ENCODE measurements at regions of chr1 and their contacts with region 1.

Region 1: GRCh38 chr1:30779294-30780071 is 21.9 kb upstream of the LAPTM5 start:
- DNase-seq: peak; percentile 37 to 76
- ATAC-seq: peak; percentile 63 to 64
- H3K4me3 ChIP-seq: no peak overlapping the region
- H3K27ac ChIP-seq: no peak overlapping the region
- H3K4me1 ChIP-seq: peaks cover 5 to 14% of the 10 kb centered on the region in 2 donors
- H3K27me3 ChIP-seq: no peaks in the 10 kb centered on the region
- CTCF ChIP-seq: peak; percentile 94 to 97 (median 96)
- POLR2A ChIP-seq: no peak

Region 2: DNA sequence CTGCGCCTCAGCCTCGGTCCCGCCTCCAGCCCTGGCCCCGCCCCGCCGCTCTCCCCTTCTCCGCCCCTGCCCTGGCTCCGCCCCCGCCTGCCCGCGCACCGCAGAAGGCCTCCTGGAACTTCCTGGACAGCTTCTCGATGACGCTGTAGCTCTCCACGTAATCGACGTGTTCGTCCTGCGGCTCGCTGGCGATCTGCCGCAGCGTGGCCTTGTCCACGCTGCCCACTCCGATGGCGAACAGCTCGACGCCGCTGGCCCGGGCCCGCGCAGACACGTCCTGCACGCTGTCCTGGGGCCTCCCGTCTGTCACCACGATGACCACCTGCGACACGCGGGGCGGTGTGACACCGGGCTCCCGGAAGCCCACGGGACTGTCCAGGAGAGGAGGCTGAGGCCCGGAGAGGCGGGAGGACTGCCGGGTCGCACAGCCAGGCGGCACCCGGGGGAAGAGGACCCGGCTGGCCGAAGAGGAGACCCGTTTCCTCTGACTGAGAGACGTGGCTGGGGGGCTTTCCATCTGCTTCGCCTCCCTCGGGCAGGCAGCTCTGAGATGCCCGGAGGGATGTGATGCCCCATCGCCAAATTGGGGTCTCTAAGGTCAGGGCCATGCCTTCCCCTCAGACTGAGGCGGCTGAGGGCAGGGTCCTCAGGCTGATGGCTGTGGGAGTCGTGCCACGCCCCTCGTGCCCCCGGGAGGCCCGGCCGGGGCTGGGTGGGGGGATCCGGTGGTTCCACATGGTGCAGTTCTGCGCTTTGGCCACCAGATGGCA is 60.7 kb before region 1 on chr1:
- in situ Hi-C with region 1: loop called in 2 of 4 experiments (anchors 5 kb)
- intact Hi-C with region 1: loop called (anchors 1 kb)
- DNase-seq: peak; percentile 71 to 94
- ATAC-seq: peak; percentile 79 to 81
- H3K4me3 ChIP-seq: peak overlapping the region; percentile 60 to 85 (median 73)
- H3K27ac ChIP-seq: peak overlapping the region; percentile 97 to 98 (median 98)
- H3K4me1 ChIP-seq: peaks cover 0 to 3% of the 10 kb centered on the region in 2 donors
- H3K27me3 ChIP-seq: no peaks in the 10 kb centered on the region
- CTCF ChIP-seq: peak; percentile 98 to 100 (median 99)
- POLR2A ChIP-seq: peak; percentile 80 to 85

Region 3: DNA sequence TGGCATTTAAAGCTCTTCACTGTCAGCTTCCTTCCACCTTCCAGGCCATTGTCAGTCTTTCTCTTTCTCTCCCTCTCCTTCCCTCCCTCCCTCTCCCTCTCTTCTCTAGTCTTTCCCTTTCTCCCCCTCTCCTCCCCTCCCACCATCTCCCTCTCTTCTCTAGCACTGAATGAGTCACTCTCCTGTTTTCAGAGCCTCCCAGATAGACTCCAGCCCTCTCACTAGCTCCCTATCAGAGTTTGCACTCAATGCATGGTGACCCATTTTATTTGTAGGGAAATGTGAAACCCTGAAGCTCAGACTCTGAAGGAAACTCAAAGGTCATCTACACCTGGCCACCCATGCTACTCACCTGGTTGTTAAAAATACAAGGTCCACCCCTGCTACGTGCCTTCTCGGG is 51.7 kb before region 1 on chr1:
- in situ Hi-C with region 1: loop called (anchors 5 kb)
- intact Hi-C with region 1: no loop called
- DNase-seq: no peak
- ATAC-seq: no peak
- H3K4me3 ChIP-seq: no peak overlapping the region
- H3K27ac ChIP-seq: no peak overlapping the region
- H3K4me1 ChIP-seq: no peaks in the 10 kb centered on the region
- H3K27me3 ChIP-seq: no peaks in the 10 kb centered on the region
- CTCF ChIP-seq: no peak
- POLR2A ChIP-seq: no peak

Region 4: DNA sequence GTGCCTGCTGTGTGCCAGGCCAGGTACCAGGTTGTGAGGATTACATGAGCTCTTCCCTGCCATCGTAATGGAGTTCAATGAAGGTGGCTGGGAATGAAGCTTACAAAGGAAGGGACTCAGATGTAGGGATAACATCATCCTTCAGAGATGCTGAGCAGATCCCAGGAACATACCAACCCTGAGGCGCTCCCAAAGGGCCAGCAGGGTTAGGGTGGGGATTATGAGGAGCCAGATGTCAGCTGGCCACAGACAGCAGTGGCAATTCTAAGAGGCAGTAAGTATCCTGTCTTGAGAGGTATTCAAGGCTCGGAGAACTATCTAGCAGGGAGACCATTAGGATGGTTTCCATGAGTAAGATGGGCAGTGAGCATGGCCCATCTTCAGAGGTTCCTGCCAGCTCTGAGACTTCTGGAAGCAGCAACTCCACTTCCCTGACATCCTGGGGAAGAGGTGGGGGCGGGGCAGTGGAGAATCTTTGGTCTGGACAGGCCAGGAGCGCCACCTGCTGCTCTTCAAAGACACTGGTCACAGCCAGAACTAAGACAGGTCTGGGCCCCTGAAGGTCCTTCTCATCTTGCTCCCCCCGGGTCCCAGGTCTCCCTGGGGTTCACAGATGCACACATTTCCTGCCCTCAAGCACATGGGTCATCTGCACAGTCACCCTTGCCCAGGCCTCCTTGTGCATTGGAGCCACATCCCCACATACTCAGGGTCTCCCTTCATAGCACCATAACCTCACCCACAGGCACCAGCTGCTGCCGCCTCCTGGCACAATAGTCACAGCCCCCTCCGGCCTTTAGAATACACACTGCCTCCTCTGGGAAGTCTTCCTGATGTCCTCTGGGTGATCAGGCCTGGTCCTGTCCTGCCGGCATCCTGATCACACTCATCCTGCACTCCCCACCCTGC is 131.8 kb after region 1 on chr1:
- in situ Hi-C with region 1: no loop called
- intact Hi-C with region 1: loop called (anchors 1 kb)
- DNase-seq: peak; percentile 72 to 80
- ATAC-seq: peak; percentile 84
- H3K4me3 ChIP-seq: no peak overlapping the region
- H3K27ac ChIP-seq: no peak overlapping the region
- H3K4me1 ChIP-seq: no peaks in the 10 kb centered on the region
- H3K27me3 ChIP-seq: peaks cover 0 to 7% (median 0%) of the 10 kb centered on the region in 3 donors
- CTCF ChIP-seq: peak; percentile 84 to 89 (median 87)
- POLR2A ChIP-seq: no peak

Measured in gastrocnemius medialis (tissue), 4 donors.